B cell (primary cell): ENCODE measurements at regions of chr15 and their contacts with region 1.

Region 1: DNA sequence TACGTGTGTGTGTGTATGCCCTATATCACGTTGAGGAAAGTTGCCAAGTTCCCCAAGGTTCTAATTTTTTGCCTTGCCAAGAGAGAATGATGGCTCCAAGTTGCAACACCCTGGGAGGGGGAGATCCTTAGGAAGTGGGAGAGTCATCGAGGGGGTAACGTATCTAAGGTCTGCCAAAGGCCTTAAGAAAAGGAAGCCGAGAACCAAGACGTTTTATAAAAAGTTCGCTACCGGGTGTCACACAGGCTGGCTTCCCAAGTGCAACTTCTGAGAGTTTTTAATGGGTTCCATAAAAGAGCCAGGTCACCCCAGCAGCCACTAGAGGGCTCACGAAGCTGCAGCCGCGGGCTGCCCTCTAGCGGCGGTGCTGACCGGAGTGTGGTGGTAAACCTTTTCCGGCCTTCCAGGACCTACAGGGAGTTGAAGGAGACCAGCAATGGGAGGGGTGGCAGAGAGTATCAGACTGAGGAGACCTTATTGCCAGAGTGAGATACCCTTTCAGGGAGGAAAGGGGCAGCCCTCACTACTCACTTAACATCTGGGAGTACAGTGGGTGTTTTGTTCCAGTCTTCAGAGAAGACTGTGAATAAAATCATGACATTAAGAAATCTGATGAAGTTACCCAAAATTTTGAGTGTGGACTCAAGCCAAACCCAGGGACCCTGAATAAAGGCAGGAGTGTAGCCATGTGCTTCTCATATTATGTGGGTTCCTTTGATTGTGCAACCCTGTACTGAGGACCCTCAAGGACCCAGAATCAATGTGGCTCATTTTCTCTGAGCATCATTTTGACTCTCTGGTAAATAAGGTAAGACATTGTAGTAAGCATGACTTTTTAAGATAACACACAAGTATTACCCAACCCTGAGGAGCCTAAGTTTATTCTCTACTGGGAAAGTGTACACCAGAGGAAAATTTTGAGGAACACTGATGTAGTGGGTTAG is 2.5 kb upstream of the RFX7 start:
- DNase-seq: peak; percentile 91
- ATAC-seq: peak; percentile 71
- H3K4me3 ChIP-seq: peak overlapping the region; percentile 11 to 66 (median 50)
- H3K4me3 Mint-ChIP-seq: peak overlapping the region; percentile 94
- H3K27ac ChIP-seq: peak overlapping the region; percentile 57 to 76
- H3K27ac Mint-ChIP-seq: peak overlapping the region; percentile 89
- H3K4me1 ChIP-seq: peaks cover 24 to 25% of the 10 kb centered on the region in 2 donors
- H3K4me1 Mint-ChIP-seq: peaks cover 32% of the 10 kb centered on the region
- H3K27me3 ChIP-seq: no peaks in the 10 kb centered on the region
- H3K27me3 Mint-ChIP-seq: no peaks in the 10 kb centered on the region
- CTCF ChIP-seq: peak; percentile 100

Region 2: DNA sequence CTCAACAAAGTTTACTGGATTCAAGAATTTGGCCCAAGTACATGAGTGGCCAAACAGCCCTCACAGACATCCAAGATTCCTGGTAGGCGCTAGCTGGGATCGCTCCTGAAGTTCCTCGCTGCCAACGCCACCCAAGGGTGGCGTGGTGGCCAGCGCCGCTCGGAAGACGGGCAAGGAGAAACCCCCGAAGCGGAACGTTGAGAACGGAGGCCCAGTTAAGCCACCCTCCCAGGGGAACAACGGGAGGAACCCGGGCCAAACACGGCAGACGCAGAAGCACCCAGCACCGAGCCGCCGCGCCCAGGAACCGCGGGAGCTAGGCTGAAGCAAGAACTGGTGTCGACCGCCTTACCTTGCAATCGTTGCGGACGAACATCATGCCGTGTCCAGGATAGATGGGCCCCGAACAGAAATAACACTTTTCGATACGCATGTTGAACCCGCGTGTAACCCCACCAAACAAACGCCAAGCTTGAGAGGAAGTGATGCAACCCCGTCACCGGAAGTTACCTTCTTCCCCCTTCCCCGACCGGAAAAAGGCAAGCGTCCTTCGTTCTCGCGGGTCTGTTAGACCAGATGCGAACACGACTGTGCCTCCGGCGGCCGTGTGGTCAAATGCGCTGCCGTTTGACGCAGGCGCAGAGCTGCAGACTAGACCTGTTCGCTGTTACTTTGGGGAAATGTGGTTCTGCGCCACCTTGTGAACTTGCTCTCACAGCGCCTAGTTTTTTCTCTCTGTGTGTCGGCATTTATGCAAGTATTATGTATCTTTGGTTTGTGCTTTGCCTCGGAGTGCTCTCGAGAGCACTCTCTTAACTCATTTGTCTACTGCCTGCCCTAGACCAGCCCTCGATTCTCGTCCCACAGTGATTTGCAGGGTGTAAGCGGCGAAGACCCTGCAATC is 1049.4 kb before region 1 on chr15 and contains the start of gene RSL24D1:
- CTCF ChIA-PET with region 1: no interaction called
- POLR2A ChIA-PET with region 1: interaction called, 5 read pairs
- intact Hi-C with region 1: loop called (anchors 10 kb)
- DNase-seq: peak; percentile 98
- ATAC-seq: peak; percentile 95
- H3K4me3 ChIP-seq: peak within 1 kb of the TSS; percentile 78 to 97 (median 90)
- H3K4me3 Mint-ChIP-seq: no peak within 1 kb of the TSS
- H3K27ac ChIP-seq: peak within 1 kb of the TSS; percentile 92
- H3K27ac Mint-ChIP-seq: no peak within 1 kb of the TSS
- H3K4me1 ChIP-seq: peaks cover 29 to 30% of the 10 kb centered on the region in 2 donors
- H3K4me1 Mint-ChIP-seq: peaks cover 9% of the 10 kb centered on the region
- H3K27me3 ChIP-seq: no peaks in the 10 kb centered on the region
- H3K27me3 Mint-ChIP-seq: no peaks in the 10 kb centered on the region
- CTCF ChIP-seq: peak; percentile 67
- total RNA-seq, gene RSL24D1: 69.0 and 80.7 TPM in 2 replicates

Region 3: DNA sequence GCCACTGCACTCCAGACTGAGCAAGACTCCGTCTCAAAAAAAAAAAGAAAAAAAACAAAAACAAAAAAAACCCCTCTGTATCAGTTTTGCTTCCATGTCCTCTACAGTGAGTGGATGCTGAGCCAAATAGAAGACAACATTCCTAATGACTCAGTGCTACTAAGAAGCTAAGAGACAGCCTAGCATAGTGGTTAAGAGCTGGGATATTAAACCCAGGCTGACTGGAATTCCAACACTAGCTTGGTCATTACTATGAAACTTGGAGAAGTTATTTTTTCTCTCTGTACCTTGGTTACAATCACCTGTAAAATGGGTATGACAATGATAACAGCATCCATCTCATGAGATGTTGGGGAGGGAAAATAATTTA is 597.1 kb before region 1 on chr15:
- CTCF ChIA-PET with region 1: no interaction called
- POLR2A ChIA-PET with region 1: no interaction called
- intact Hi-C with region 1: loop called (anchors 10 kb)
- DNase-seq: no peak
- ATAC-seq: no peak
- H3K4me3 ChIP-seq: no peak overlapping the region
- H3K4me3 Mint-ChIP-seq: no peak overlapping the region
- H3K27ac ChIP-seq: no peak overlapping the region
- H3K27ac Mint-ChIP-seq: no peak overlapping the region
- H3K4me1 ChIP-seq: no peaks in the 10 kb centered on the region
- H3K4me1 Mint-ChIP-seq: no peaks in the 10 kb centered on the region
- H3K27me3 ChIP-seq: no peaks in the 10 kb centered on the region
- H3K27me3 Mint-ChIP-seq: peaks cover 4% of the 10 kb centered on the region
- CTCF ChIP-seq: no peak

Region 4: GRCh38 chr15:56098195-56098863 is 147.8 kb before region 1 on chr15:
- CTCF ChIA-PET with region 1: interaction called, 4 read pairs
- POLR2A ChIA-PET with region 1: no interaction called
- intact Hi-C with region 1: loop called (anchors 10 kb)
- DNase-seq: no peak
- ATAC-seq: no peak
- H3K4me3 ChIP-seq: no peak overlapping the region
- H3K4me3 Mint-ChIP-seq: no peak overlapping the region
- H3K27ac ChIP-seq: no peak overlapping the region
- H3K27ac Mint-ChIP-seq: no peak overlapping the region
- H3K4me1 ChIP-seq: no peaks in the 10 kb centered on the region
- H3K4me1 Mint-ChIP-seq: no peaks in the 10 kb centered on the region
- H3K27me3 ChIP-seq: no peaks in the 10 kb centered on the region
- H3K27me3 Mint-ChIP-seq: no peaks in the 10 kb centered on the region
- CTCF ChIP-seq: no peak

Region 5: DNA sequence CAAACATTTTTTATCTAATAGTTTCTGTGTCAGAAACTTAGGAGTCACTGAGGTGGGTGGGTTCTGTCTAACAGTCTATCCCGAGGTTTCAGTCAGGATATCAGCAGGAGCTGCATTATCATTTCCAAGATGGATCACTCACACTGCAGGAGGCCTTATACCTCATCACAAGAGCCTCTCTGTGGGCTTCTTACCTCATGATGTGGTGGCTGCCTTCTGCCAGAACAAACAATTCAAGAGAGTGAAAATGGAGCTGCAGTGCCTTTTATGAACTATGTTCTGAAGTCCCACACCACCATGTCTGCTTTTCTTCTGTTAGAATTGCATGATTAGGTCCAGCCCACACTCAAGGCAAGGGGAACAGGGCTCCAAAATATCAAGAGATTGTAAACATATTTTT is 30.4 kb before region 1 on chr15:
- CTCF ChIA-PET with region 1: interaction called, 10 read pairs
- POLR2A ChIA-PET with region 1: interaction called, 3 read pairs
- intact Hi-C with region 1: no loop called
- DNase-seq: no peak
- ATAC-seq: no peak
- H3K4me3 ChIP-seq: no peak overlapping the region
- H3K4me3 Mint-ChIP-seq: no peak overlapping the region
- H3K27ac ChIP-seq: peak overlapping the region in 1 of 2 donors; percentile 0
- H3K27ac Mint-ChIP-seq: peak overlapping the region; percentile 37
- H3K4me1 ChIP-seq: no peaks in the 10 kb centered on the region
- H3K4me1 Mint-ChIP-seq: peaks cover 11% of the 10 kb centered on the region
- H3K27me3 ChIP-seq: no peaks in the 10 kb centered on the region
- H3K27me3 Mint-ChIP-seq: no peaks in the 10 kb centered on the region
- CTCF ChIP-seq: no peak

Region 6: DNA sequence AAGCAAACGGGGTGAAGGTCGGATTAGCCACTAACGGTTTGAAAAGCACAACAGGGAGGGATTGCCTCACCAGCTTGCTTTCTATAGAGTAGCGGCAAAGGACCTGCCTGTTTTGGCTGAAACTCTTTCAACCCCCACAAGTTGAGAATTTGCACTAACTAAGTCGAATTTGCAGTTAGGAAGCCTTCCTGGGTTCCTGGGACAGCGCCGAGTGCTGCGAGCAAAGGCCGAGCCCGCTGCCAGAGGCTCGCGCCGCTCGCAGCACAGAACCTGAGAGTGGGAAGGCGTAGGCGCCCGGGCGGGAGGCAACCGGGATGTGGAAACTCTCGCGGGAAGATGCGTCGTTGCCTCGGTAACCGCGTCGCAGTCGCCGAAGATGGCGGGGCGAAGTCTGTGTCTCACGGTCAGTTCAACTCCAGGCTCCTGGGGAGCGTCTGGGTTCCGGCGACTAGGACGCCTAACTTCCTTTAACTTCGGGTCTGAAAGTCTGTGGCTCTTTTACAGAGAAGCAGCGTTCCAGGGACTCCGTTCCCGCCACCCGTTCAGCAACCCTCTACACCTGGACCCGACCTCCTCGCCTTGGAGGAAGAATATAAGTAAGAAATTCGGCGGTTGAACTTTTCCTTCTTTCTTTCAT is 119.0 kb after region 1 on chr15 and contains the start of gene TEX9:
- CTCF ChIA-PET with region 1: interaction called, 4 read pairs
- POLR2A ChIA-PET with region 1: no interaction called
- intact Hi-C with region 1: loop called (anchors 1 kb)
- DNase-seq: peak; percentile 86
- ATAC-seq: peak; percentile 88
- H3K4me3 ChIP-seq: peak within 1 kb of the TSS; percentile 60 to 71 (median 68)
- H3K4me3 Mint-ChIP-seq: peak within 1 kb of the TSS; percentile 95
- H3K27ac ChIP-seq: peak within 1 kb of the TSS; percentile 1 to 71
- H3K27ac Mint-ChIP-seq: peak within 1 kb of the TSS; percentile 90
- H3K4me1 ChIP-seq: peaks cover 15% of the 10 kb centered on the region in 2 donors
- H3K4me1 Mint-ChIP-seq: peaks cover 36% of the 10 kb centered on the region
- H3K27me3 ChIP-seq: peaks cover 0 to 8% (median 5%) of the 10 kb centered on the region in 4 experiments
- H3K27me3 Mint-ChIP-seq: no peaks in the 10 kb centered on the region
- CTCF ChIP-seq: no peak
- total RNA-seq, gene TEX9: 41.8 and 43.1 TPM in 2 replicates

Region 7: DNA sequence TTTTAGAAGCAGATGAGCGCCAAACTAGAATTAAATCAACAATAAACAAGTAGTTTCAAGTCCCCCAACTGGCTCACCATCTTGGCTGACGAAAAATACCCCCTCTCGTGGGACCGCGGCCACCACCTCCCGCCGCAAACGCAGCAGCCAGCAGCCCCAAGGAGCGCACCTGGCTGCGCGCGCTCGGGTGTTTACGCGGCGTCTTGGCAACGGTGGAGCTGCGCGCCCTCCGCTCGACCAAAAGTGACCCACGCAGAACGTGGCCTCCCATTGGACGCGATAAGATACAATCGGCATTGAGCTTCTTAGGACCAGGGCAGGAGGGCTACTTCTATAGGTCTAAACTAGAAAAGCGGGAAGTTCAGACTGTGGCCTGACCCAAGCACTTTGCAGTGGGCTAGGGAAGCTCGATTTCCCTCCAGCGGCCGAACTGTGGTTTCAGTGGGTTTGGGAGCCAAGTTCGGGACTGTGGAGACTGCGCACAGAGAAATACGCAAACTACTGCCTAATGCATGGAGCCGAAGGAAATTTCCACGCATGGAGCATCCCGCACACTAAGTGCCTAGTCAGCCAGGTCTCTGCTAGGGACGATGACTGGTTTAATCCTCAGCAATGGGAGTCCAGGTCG is 218.9 kb after region 1 on chr15 and contains the start of gene MNS1:
- CTCF ChIA-PET with region 1: interaction called, 4 read pairs
- POLR2A ChIA-PET with region 1: no interaction called
- intact Hi-C with region 1: loop called (anchors 2 kb)
- DNase-seq: peak; percentile 97
- ATAC-seq: peak; percentile 96
- H3K4me3 ChIP-seq: peak within 1 kb of the TSS; percentile 37 to 71 (median 59)
- H3K4me3 Mint-ChIP-seq: peak within 1 kb of the TSS; percentile 94
- H3K27ac ChIP-seq: peak within 1 kb of the TSS; percentile 56 to 79
- H3K27ac Mint-ChIP-seq: peak within 1 kb of the TSS; percentile 96
- H3K4me1 ChIP-seq: peaks cover 4 to 12% of the 10 kb centered on the region in 2 donors
- H3K4me1 Mint-ChIP-seq: peaks cover 21% of the 10 kb centered on the region
- H3K27me3 ChIP-seq: no peaks in the 10 kb centered on the region
- H3K27me3 Mint-ChIP-seq: no peaks in the 10 kb centered on the region
- CTCF ChIP-seq: no peak
- total RNA-seq, gene MNS1: 0.83 TPM in 1 of 2 replicates, not detected in the other